Endothelial cell of umbilical vein (primary cell): ENCODE measurements at regions of chr3 and their contacts with region 1.

Region 1: DNA sequence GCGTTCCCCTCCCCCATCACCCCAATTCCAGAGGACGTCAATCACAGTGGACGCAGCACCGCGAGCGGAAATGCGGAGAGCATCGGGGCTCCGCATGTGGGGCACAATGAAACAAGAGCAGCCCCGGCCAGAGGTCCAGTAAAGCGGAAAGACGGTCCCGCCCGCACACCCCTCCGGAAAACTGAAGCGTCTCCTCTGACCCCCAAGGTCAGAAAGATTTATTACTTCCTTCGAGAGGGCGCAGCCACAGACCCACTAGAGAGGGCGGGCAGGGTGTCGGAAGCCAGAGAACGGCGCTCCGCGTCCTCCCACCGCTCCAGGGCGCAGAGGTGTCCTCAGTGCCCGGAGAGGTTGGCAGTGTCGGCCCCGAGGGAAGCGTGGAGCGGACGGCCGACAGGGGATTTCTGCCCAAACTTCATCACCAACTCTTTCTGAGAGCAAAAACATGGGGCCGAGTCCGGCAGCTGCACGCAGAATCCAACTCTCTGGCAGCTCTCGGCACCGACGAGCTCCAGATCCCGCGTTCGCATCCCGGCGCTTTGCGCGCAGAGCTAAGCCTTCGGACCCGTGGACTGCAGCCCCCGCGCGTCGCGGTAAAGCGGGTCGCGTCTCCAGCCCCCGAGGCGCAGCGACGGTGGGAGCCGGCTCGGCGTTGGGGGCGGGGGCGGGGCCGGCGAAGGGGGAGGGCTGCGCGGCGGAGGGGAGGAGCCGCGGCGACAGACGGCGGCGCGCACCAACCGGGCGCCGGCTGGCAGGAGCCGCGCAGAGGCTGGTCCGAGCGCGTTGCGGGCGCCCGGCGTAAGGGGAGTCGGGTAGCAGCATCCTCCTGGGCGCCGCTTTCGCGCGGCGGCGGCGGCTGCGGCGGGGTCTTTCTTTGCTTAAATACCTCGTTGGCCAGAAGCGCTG is at the start of gene CHST2:
- DNase-seq: peak; percentile 73
- H3K4me3 ChIP-seq: peak within 1 kb of the TSS; percentile 48 to 94 (median 84)
- H3K27ac ChIP-seq: peak within 1 kb of the TSS; percentile 16
- H3K4me1 ChIP-seq: peaks cover 5% of the 10 kb centered on the region
- H3K27me3 ChIP-seq: peaks cover 0 to under 1% of the 10 kb centered on the region in 2 experiments
- CTCF ChIP-seq: no peak
- POLR2A ChIP-seq: peak; percentile 67
- total RNA-seq, gene CHST2: 2.5 and 6.5 TPM in 2 replicates

Region 2: GRCh38 chr3:143135150-143135549 is 15.9 kb after region 1 on chr3:
- CTCF ChIA-PET with region 1: interaction called, 14 read pairs
- POLR2A ChIA-PET with region 1: no interaction called
- dilution Hi-C with region 1: no loop called
- intact Hi-C with region 1: loop called (anchors 2 kb)
- DNase-seq: peak; percentile 81
- H3K4me3 ChIP-seq: no peak overlapping the region
- H3K27ac ChIP-seq: peak overlapping the region; percentile 19
- H3K4me1 ChIP-seq: peaks cover 26% of the 10 kb centered on the region
- H3K27me3 ChIP-seq: no peaks in the 10 kb centered on the region
- CTCF ChIP-seq: no peak
- POLR2A ChIP-seq: peak; percentile 56

Region 3: GRCh38 chr3:143329567-143330211 is 210.4 kb after region 1 on chr3:
- CTCF ChIA-PET with region 1: interaction called, 5 read pairs
- POLR2A ChIA-PET with region 1: no interaction called
- dilution Hi-C with region 1: no loop called
- intact Hi-C with region 1: loop called (anchors 2 kb)
- DNase-seq: peak; percentile 62
- H3K4me3 ChIP-seq: no peak overlapping the region
- H3K27ac ChIP-seq: no peak overlapping the region
- H3K4me1 ChIP-seq: peaks cover 37% of the 10 kb centered on the region
- H3K27me3 ChIP-seq: no peaks in the 10 kb centered on the region
- CTCF ChIP-seq: peak in 1 of 2 donors; percentile 5
- POLR2A ChIP-seq: no peak

Region 4: DNA sequence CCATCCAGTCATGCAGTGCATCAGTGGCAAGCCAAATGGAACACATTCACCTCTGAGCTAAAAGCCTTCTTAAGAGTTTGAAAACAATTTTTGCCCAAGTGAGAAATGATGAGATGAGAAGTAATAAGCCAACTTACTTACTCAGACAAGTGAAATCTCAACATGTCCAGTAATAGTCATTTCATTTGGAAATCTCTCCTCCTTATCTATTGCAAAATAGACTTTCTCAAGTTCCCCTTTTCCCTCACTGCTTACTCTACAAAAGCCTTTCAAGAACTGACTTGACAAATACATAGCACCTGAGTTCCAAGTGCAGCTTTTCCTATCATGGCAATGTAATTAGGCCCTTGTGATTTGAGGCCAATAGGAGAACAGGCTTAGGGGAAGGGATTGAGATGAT is 446.7 kb after region 1 on chr3:
- CTCF ChIA-PET with region 1: no interaction called
- POLR2A ChIA-PET with region 1: no interaction called
- dilution Hi-C with region 1: no loop called
- intact Hi-C with region 1: no loop called
- DNase-seq: no peak
- H3K4me3 ChIP-seq: no peak overlapping the region
- H3K27ac ChIP-seq: no peak overlapping the region
- H3K4me1 ChIP-seq: peaks cover 10% of the 10 kb centered on the region
- H3K27me3 ChIP-seq: no peaks in the 10 kb centered on the region
- CTCF ChIP-seq: no peak
- POLR2A ChIP-seq: no peak

Region 5: GRCh38 chr3:143578810-143579435 is 459.7 kb after region 1 on chr3:
- CTCF ChIA-PET with region 1: no interaction called
- POLR2A ChIA-PET with region 1: no interaction called
- dilution Hi-C with region 1: no loop called
- intact Hi-C with region 1: loop called (anchors 5 kb)
- DNase-seq: no peak
- H3K4me3 ChIP-seq: no peak overlapping the region
- H3K27ac ChIP-seq: no peak overlapping the region
- H3K4me1 ChIP-seq: peaks cover 18% of the 10 kb centered on the region
- H3K27me3 ChIP-seq: no peaks in the 10 kb centered on the region
- CTCF ChIP-seq: no peak
- POLR2A ChIP-seq: no peak

Region 6: DNA sequence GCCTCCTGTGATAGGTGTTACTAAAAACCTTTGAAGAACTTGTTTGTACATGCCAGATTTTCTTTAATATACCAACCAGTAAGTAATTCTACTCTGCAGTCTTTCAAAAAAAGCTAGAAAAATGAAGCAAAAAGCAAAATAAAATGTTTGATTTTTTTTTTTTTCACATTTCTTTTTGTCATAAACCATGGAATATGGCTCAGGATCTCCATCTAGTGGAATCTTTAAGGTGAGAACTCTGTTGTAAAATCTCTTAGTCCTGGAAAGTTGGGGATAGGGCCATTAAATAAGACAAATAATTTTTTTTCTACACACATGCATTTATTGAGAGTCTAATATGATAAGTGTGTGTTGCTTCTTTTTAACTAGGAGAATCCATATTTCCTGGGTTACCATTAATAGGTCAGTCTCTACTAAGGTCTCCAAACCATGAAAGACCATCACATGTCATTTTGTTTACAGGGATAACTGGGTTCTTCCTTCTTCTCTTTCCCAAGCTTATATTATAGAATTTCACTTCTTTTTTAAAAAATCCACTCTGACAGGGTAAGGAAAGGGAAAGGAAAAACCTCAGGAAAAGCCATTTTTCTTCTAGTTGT is 644.4 kb after region 1 on chr3:
- CTCF ChIA-PET with region 1: no interaction called
- POLR2A ChIA-PET with region 1: no interaction called
- dilution Hi-C with region 1: no loop called
- intact Hi-C with region 1: loop called (anchors 2 kb)
- DNase-seq: peak; percentile 38
- H3K4me3 ChIP-seq: no peak overlapping the region
- H3K27ac ChIP-seq: no peak overlapping the region
- H3K4me1 ChIP-seq: no peaks in the 10 kb centered on the region
- H3K27me3 ChIP-seq: no peaks in the 10 kb centered on the region
- CTCF ChIP-seq: peak; percentile 18 to 22
- POLR2A ChIP-seq: no peak